ENCODE measurements at regions of chr6 and their contacts with region 1.

Region 1: GRCh38 chr6:166691199-166691598 is 64.1 kb upstream of the RPS6KA2 start:
- DNase-seq: peak; percentile 83 to 92
- ATAC-seq: peak; percentile 78 to 82
- H3K4me3 ChIP-seq: peak overlapping the region; percentile 38 to 50 (median 47)
- H3K27ac ChIP-seq: peak overlapping the region; percentile 89 to 97 (median 96)
- H3K4me1 ChIP-seq: peaks cover 24 to 26% of the 10 kb centered on the region in 2 donors
- H3K27me3 ChIP-seq: no peaks in the 10 kb centered on the region
- CTCF ChIP-seq: no peak
- POLR2A ChIP-seq: peak; percentile 55 to 58

Region 2: GRCh38 chr6:166365221-166365620 is 326.0 kb before region 1 on chr6:
- in situ Hi-C with region 1: no loop called
- intact Hi-C with region 1: loop called (anchors 5 kb)
- DNase-seq: peak in 1 of 2 donors; percentile 19
- ATAC-seq: peak; percentile 49 to 55
- H3K4me3 ChIP-seq: no peak overlapping the region
- H3K27ac ChIP-seq: peak overlapping the region; percentile 66 to 72 (median 70)
- H3K4me1 ChIP-seq: peaks cover 39 to 47% of the 10 kb centered on the region in 2 donors
- H3K27me3 ChIP-seq: no peaks in the 10 kb centered on the region
- CTCF ChIP-seq: no peak
- POLR2A ChIP-seq: no peak

Region 3: GRCh38 chr6:166382933-166383801 is 308.0 kb before region 1 on chr6 and contains the start of gene MPC1:
- in situ Hi-C with region 1: no loop called
- intact Hi-C with region 1: loop called (anchors 5 kb)
- DNase-seq: peak; percentile 92 to 96
- ATAC-seq: peak; percentile 79 to 87
- H3K4me3 ChIP-seq: peak within 1 kb of the TSS; percentile 80 to 94 (median 90)
- H3K27ac ChIP-seq: peak within 1 kb of the TSS; percentile 93 to 99 (median 96)
- H3K4me1 ChIP-seq: peaks cover 25 to 34% of the 10 kb centered on the region in 2 donors
- H3K27me3 ChIP-seq: no peaks in the 10 kb centered on the region
- CTCF ChIP-seq: no peak
- POLR2A ChIP-seq: peak; percentile 82 to 94
- total RNA-seq, gene MPC1: 75.0 to 127 (median 97.4) TPM

Region 4: GRCh38 chr6:166556871-166557322 is 134.3 kb before region 1 on chr6:
- in situ Hi-C with region 1: no loop called
- intact Hi-C with region 1: loop called (anchors 1 kb)
- DNase-seq: peak; percentile 97 to 99
- ATAC-seq: peak; percentile 81 to 90
- H3K4me3 ChIP-seq: peak overlapping the region; percentile 27 to 44 (median 35)
- H3K27ac ChIP-seq: peak overlapping the region; percentile 86 to 91 (median 86)
- H3K4me1 ChIP-seq: peaks cover 37 to 69% of the 10 kb centered on the region in 2 donors
- H3K27me3 ChIP-seq: no peaks in the 10 kb centered on the region
- CTCF ChIP-seq: peak in 2 of 5 experiments; percentile 11 to 27
- POLR2A ChIP-seq: peak; percentile 88 to 94

Region 5: GRCh38 chr6:166572370-166573261 is 118.6 kb before region 1 on chr6:
- in situ Hi-C with region 1: no loop called
- intact Hi-C with region 1: loop called (anchors 1 kb)
- DNase-seq: no peak
- ATAC-seq: no peak
- H3K4me3 ChIP-seq: no peak overlapping the region
- H3K27ac ChIP-seq: peak overlapping the region in 3 of 4 donors; percentile 28 to 43 (median 34)
- H3K4me1 ChIP-seq: peaks cover 5 to 33% of the 10 kb centered on the region in 2 donors
- H3K27me3 ChIP-seq: no peaks in the 10 kb centered on the region
- CTCF ChIP-seq: no peak
- POLR2A ChIP-seq: no peak

Region 6: DNA sequence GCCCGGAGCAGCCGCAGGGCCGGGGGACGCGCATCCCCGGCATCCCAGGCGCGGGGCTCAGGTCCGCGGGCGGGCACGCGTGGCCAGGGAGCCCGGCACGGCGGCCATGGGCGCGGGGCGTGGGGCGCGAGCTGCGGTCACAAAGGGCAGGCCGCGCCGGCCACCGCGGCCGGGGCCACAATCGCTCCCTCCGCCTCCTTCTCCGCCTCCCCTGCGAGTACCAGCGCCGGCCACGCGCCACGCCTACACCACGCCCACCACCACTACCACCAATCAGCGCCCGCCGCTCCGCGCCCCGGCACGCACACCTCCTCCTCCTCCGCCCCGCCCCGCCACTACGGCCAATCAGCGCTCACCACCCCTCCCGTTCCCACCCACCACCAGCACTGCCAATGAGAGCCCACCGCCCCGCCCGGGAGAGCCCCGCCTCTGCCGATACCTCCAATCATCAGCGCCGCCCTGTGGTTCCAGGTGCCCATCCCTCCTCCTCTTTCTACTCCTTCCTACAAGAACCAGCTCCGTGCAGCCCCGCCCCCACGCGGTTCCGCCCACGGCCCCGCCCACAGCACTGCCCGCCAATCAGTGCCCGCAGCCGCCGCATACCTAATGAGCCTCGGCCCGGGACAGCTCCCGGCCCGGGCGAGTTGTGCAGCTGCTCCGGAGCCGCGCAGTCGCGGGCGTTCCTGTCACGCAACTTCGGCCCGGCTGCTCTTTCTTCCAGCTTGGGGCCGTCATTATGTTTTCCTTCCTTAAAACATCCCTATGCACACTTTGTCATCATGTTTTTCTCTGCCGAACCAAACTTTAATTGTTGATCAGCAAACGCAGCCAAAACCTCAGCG is 63.9 kb before region 1 on chr6 and contains the start of gene RPS6KA2:
- in situ Hi-C with region 1: no loop called
- intact Hi-C with region 1: loop called (anchors 2 kb)
- DNase-seq: peak; percentile 100
- ATAC-seq: peak; percentile 72 to 77
- H3K4me3 ChIP-seq: peak within 1 kb of the TSS; percentile 71 to 81 (median 73)
- H3K27ac ChIP-seq: peak within 1 kb of the TSS; percentile 91 to 97 (median 96)
- H3K4me1 ChIP-seq: peaks cover 33 to 51% of the 10 kb centered on the region in 2 donors
- H3K27me3 ChIP-seq: no peaks in the 10 kb centered on the region
- CTCF ChIP-seq: peak in 1 of 5 experiments; percentile 25
- POLR2A ChIP-seq: peak; percentile 97 to 98
- total RNA-seq, gene RPS6KA2: 18.7 to 35.7 (median 27.4) TPM

Region 7: GRCh38 chr6:166633732-166634535 is 57.3 kb before region 1 on chr6:
- in situ Hi-C with region 1: no loop called
- intact Hi-C with region 1: loop called (anchors 2 kb)
- DNase-seq: peak; percentile 87 to 92
- ATAC-seq: peak; percentile 94 to 98
- H3K4me3 ChIP-seq: peak overlapping the region in 3 of 4 donors; percentile 15 to 24 (median 23)
- H3K27ac ChIP-seq: peak overlapping the region; percentile 73 to 94 (median 76)
- H3K4me1 ChIP-seq: peaks cover 37 to 38% of the 10 kb centered on the region in 2 donors
- H3K27me3 ChIP-seq: no peaks in the 10 kb centered on the region
- CTCF ChIP-seq: no peak
- POLR2A ChIP-seq: peak; percentile 68 to 83

Measured in gastrocnemius medialis (tissue), 4 donors.